Head of caudate nucleus (tissue), 42 donors: ENCODE measurements at regions of chr12 and their contacts with region 1.

Region 1: GRCh38 chr12:120317224-120318105 is 10.1 kb downstream of the PLA2G1B start:
- DNase-seq: peak; percentile 97 to 100 (median 99)

Region 2: DNA sequence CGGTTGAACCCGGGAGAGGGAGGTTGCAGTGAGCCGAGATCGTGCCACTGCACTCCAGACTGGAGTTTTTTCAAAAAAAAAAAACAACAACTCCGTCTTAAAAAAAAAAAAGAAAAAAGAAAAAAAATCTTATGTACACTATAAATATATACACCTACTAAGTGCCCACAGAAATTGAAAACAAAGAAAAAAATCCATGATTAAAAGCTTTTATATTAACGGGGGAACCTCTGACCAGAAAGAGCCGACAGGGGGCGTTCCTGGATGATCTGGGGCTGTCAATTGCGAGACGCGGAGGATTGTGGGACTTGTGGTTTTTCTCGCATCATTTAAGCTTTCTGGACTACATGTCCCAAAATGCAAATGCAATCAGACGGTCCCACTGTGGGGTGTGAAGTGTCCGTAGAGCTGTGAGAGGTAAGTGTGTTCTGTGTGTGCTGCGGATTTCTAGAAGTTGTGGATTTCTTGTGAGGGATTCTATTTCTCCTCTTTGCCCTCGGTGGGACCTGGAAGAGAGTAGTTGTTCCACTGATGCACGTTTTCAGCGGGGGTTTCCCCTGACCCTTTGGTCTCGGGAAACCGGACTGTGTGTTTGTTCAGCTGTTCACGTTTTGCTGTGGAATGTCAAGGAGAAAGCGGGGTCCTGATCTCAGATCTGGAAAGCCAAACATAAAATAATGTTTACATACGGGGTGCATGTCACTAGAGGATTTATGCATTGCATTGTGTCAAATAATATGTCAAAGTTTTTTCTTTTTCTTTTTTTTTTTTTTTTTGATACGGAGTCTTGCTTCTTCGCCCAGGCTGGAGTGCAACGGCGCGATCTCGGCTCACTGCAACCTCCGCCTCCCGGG is 15.3 kb before region 1 on chr12 and contains the start of gene SIRT4:
- intact Hi-C with region 1: loop called (anchors 2 kb)
- DNase-seq: peak; percentile 76 to 98 (median 93)